BJ (cell line): ENCODE measurements at regions of chr20 and their contacts with region 1.

Region 1: DNA sequence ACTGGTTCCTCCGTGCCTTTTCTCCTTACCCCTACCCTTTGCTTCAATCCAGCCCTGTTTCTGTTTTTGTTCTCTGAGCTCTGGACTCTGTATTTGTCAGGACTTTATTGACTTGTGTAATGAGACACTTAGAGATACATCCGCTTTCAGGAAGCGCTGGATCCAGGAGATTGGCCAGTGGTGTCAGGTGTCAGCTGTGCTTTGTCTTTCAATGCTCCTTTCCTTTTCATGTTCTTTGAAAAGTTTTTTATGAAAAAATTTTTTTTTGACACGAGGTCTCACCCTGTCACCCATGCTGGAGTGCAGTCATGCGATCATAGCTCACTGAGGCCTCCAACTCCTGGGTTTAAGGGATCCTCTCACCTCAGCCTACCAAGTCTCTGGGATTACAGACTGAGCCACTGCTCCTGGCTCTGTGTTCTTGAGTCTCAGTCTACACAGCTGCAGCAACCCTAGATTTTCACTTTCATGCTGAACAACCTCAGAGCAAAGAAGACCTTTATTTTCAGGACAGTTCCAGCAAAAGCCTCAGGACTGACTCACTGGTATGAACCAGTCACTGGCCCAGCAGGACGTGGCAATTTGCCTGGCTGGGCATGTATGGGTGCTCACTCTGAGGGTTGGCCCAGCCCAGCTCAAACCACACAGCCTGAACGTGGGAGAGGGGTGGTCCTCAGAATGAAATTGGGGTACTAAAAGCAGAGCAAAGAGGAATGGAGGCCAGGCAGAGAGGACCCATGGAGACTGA is 108.5 kb downstream of the DHX35 start:
- DNase-seq: no peak
- H3K4me3 ChIP-seq: no peak overlapping the region
- H3K27me3 ChIP-seq: no peaks in the 10 kb centered on the region
- CTCF ChIP-seq: no peak

Region 2: GRCh38 chr20:39081255-39081654 is 10.6 kb after region 1 on chr20:
- CTCF ChIA-PET with region 1: interaction called, 79 read pairs
- POLR2A ChIA-PET with region 1: no interaction called
- DNase-seq: peak; percentile 17
- H3K4me3 ChIP-seq: no peak overlapping the region
- H3K27me3 ChIP-seq: peaks cover 7% of the 10 kb centered on the region
- CTCF ChIP-seq: peak; percentile 91